Kidney (tissue), 22 donors: ENCODE measurements at regions of chr20 and their contacts with region 1.

Region 1: GRCh38 chr20:32652739-32653526 is 20.8 kb downstream of the C20orf203 start:
- DNase-seq: peak; percentile 90 to 93 (median 92)
- H3K4me3 ChIP-seq: no peak overlapping the region
- H3K27ac ChIP-seq: no peak overlapping the region
- H3K4me1 ChIP-seq: peaks cover 0 to 2% (median 0%) of the 10 kb centered on the region in 3 donors
- H3K27me3 ChIP-seq: no peaks in the 10 kb centered on the region
- CTCF ChIP-seq: peak; percentile 95

Region 2: GRCh38 chr20:32018269-32019074 is 634.5 kb before region 1 on chr20:
- intact Hi-C with region 1: no loop called
- DNase-seq: peak; percentile 89 to 94 (median 92)
- H3K4me3 ChIP-seq: peak overlapping the region; percentile 14 to 39 (median 36)
- H3K27ac ChIP-seq: no peak overlapping the region
- H3K4me1 ChIP-seq: peaks cover 0 to 5% (median 0%) of the 10 kb centered on the region in 3 donors
- H3K27me3 ChIP-seq: peaks cover 12% of the 10 kb centered on the region
- CTCF ChIP-seq: no peak

Region 3: GRCh38 chr20:32521780-32522525 is 131.0 kb before region 1 on chr20:
- intact Hi-C with region 1: loop called (anchors 5 kb)
- DNase-seq: peak; percentile 87 to 92 (median 91)
- H3K4me3 ChIP-seq: no peak overlapping the region
- H3K27ac ChIP-seq: no peak overlapping the region
- H3K4me1 ChIP-seq: peaks cover 0 to 20% (median 3%) of the 10 kb centered on the region in 3 donors
- H3K27me3 ChIP-seq: no peaks in the 10 kb centered on the region
- CTCF ChIP-seq: peak; percentile 90